ENCODE measurements at regions of chr1 and their contacts with region 1.

Region 1: DNA sequence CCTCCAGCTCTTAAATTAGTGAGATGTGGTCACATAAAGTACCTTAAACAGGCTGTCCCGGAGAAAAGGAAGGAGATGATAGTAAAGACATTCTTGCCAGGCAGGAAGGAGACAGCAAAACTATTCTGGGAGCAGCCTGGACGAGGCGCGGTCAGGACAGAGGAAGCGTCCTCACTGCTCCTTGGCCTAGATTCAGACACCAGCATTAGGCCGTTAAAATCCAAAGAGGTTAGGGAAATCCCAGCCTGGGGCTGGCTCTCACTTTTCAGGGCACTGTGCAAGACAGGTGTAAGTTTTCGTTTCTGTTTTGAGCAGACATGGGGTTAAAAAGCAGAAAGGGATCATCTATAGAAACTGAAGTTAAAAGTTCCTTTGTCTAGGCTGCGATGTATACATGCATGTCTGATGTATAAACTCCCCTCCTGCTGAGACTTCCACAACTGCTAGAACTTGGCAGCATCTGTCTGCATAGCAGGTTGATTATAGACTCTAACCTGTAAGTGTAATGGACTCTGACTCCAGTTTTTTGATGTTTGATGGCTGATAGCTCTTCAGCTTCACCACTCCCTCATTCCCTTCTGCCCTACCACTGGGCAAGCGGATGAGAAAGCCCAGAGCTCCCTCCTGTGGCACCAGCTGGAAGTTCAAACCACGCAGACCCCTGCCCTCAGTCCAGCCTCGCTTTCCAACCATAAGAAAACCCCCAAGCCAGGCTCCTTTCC is 21.5 kb downstream of the STPG1 start:
- DNase-seq: peak; percentile 75
- ATAC-seq: peak; percentile 80
- H3K4me3 Mint-ChIP-seq: peak overlapping the region; percentile 59
- H3K27ac Mint-ChIP-seq: peak overlapping the region; percentile 95
- H3K4me1 Mint-ChIP-seq: peaks cover 41% of the 10 kb centered on the region
- H3K27me3 Mint-ChIP-seq: no peaks in the 10 kb centered on the region
- CTCF ChIP-seq: peak; percentile 84

Region 2: GRCh38 chr1:24201941-24202440 is 190.1 kb before region 1 on chr1:
- CTCF ChIA-PET with region 1: interaction called, 376 read pairs
- POLR2A ChIA-PET with region 1: interaction called, 9 read pairs
- intact Hi-C with region 1: loop called (anchors 2 kb)
- DNase-seq: peak; percentile 80
- ATAC-seq: peak; percentile 41
- H3K4me3 Mint-ChIP-seq: no peak overlapping the region
- H3K27ac Mint-ChIP-seq: no peak overlapping the region
- H3K4me1 Mint-ChIP-seq: peaks cover 14% of the 10 kb centered on the region
- H3K27me3 Mint-ChIP-seq: peaks cover 11% of the 10 kb centered on the region
- CTCF ChIP-seq: peak; percentile 97

Region 3: GRCh38 chr1:24364975-24365678 is 26.9 kb before region 1 on chr1:
- CTCF ChIA-PET with region 1: interaction called, 29 read pairs
- POLR2A ChIA-PET with region 1: interaction called, 3 read pairs
- intact Hi-C with region 1: no loop called
- DNase-seq: peak; percentile 60
- ATAC-seq: peak; percentile 98
- H3K4me3 Mint-ChIP-seq: no peak overlapping the region
- H3K27ac Mint-ChIP-seq: peak overlapping the region; percentile 22
- H3K4me1 Mint-ChIP-seq: peaks cover 14% of the 10 kb centered on the region
- H3K27me3 Mint-ChIP-seq: no peaks in the 10 kb centered on the region
- CTCF ChIP-seq: no peak

Region 4: GRCh38 chr1:24409535-24409934 is 17.5 kb after region 1 on chr1:
- CTCF ChIA-PET with region 1: interaction called, 103 read pairs
- POLR2A ChIA-PET with region 1: interaction called, 4 read pairs
- intact Hi-C with region 1: no loop called
- DNase-seq: no peak
- ATAC-seq: no peak
- H3K4me3 Mint-ChIP-seq: no peak overlapping the region
- H3K27ac Mint-ChIP-seq: no peak overlapping the region
- H3K4me1 Mint-ChIP-seq: peaks cover 13% of the 10 kb centered on the region
- H3K27me3 Mint-ChIP-seq: no peaks in the 10 kb centered on the region
- CTCF ChIP-seq: no peak

Region 5: GRCh38 chr1:24526940-24527542 is 135.0 kb after region 1 on chr1:
- CTCF ChIA-PET with region 1: interaction called, 10 read pairs
- POLR2A ChIA-PET with region 1: no interaction called
- intact Hi-C with region 1: no loop called
- DNase-seq: peak; percentile 70
- ATAC-seq: peak; percentile 65
- H3K4me3 Mint-ChIP-seq: no peak overlapping the region
- H3K27ac Mint-ChIP-seq: peak overlapping the region; percentile 55
- H3K4me1 Mint-ChIP-seq: peaks cover 57% of the 10 kb centered on the region
- H3K27me3 Mint-ChIP-seq: no peaks in the 10 kb centered on the region
- CTCF ChIP-seq: peak; percentile 82